ENCODE measurements at regions of chr4 and their contacts with region 1.

Region 1: GRCh38 chr4:155539746-155540145 is 126.9 kb upstream of the GUCY1A1 start:
- DNase-seq: no peak
- ATAC-seq: no peak
- H3K4me3 ChIP-seq: no peak overlapping the region
- H3K27ac ChIP-seq: no peak overlapping the region
- H3K4me1 ChIP-seq: peaks cover 0 to 24% (median 4%) of the 10 kb centered on the region in 12 donors
- H3K27me3 ChIP-seq: no peaks in the 10 kb centered on the region
- CTCF ChIP-seq: no peak
- POLR2A ChIP-seq: no peak

Region 2: GRCh38 chr4:155569960-155570515 is 30.3 kb after region 1 on chr4:
- intact Hi-C with region 1: loop called in 1 of 10 experiments (anchors 5 kb)
- DNase-seq: no peak
- ATAC-seq: no peak
- H3K4me3 ChIP-seq: no peak overlapping the region
- H3K27ac ChIP-seq: no peak overlapping the region
- H3K4me1 ChIP-seq: peaks cover 0 to 18% (median 0%) of the 10 kb centered on the region in 12 donors
- H3K27me3 ChIP-seq: no peaks in the 10 kb centered on the region
- CTCF ChIP-seq: no peak
- POLR2A ChIP-seq: no peak

Measured in heart left ventricle (tissue), 16 donors.